ENCODE measurements at regions of chr2 and their contacts with region 1.

Region 1: DNA sequence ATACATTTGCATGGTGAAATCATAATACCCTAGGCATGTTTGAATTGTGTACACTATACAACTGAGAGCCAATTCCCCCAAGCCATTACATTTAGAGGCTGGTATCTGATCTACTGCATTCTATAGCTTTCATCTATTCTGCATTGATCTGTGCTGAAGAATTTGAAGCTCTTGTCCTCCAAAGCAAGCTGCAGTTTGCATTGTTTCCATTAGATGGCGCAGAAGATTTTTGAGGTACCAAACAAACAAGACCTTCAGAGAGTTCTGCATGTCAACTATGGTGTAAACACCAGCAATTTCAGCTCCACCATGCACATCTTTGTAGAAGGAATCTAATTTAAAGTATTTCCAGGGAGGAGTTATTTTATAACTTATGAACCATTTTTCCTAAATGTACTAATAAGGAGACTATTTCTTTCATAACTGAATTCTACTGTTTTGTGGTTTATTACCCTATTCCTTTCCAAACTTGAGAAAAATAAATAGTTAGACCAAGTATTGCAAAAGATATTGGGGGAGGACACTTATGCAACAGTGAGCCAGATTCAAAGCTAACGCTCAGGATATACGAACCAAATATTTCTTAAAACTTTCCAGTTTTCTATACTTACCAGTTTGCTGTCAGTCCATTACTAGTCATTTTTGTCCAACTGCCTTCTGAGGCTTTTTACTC is 761.8 kb upstream of the ACVR2A start:
- DNase-seq: no peak
- ATAC-seq: peak; percentile 75

Region 2: DNA sequence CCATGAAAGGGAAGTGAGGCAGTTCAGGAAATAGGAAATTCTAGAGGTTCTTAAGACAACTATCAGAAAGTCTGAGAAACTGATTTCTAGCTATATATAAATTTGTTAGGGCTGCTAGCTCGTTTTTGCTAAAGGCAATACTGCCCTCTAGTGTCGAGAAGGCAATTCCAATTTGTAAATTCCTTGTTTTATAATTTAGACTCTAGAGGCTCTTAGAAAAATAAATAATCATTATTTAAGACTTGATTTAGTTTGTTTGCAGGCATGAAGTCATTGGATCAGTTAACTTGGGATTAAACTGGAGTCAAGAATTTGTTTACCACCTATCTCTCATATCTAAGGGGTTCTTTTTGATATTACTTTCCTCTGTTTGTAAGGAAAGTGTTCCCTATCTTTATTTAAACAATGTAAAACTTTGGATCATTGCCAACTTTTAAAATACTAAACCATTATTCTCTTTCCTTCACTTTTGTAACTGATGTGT is 828.0 kb after region 1 on chr2:
- intact Hi-C with region 1: loop called (anchors 2 kb)
- DNase-seq: no peak
- ATAC-seq: no peak